Right ventricle myocardium inferior (tissue), 1 donor: ENCODE measurements at regions of chr9 and their contacts with region 1.

Region 1: DNA sequence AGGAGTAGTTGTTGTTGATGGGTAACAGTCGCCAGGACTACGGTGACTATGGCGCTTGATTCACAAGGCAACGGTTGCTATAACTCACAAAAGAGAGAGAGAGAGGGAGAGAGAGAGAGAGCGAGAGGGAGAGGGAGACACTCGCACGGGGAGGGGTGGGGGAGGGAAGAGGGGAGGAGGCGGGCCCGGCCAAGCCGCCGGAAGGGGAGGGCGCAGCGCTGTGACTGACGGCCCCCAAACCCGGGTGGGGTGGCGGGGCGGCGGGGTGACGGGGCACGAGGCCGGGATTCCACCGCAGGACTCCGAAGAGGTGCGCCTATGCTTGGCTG is at the start of gene RFX3:
- DNase-seq: peak; percentile 95
- ATAC-seq: peak; percentile 96
- total RNA-seq, gene RFX3: 3.7 TPM

Region 2: DNA sequence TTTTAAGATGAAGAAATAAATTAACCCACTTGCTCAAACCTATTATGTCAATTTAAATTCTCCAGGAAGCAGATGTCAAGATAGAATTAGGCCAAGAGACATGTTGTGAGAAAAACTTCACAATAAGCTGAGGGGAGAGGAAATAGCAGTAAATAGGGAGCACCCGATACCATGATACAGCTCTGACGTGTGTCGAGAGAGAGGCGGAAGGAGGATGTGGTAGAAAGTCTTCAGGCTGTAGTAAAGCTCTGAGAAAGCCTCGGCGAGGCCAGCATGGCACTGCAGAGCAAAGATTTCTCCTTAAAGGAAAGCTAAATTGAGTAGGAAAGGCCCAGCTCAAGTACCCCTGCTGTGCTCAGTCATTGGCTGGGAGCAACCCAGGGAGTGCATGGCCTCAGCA is 675.9 kb before region 1 on chr9:
- intact Hi-C with region 1: loop called (anchors 2 kb)
- DNase-seq: no peak
- ATAC-seq: no peak

Region 3: GRCh38 chr9:3235497-3235896 is 290.3 kb before region 1 on chr9:
- intact Hi-C with region 1: no loop called
- DNase-seq: no peak
- ATAC-seq: no peak

Region 4: GRCh38 chr9:3473405-3473804 is 52.4 kb before region 1 on chr9:
- intact Hi-C with region 1: loop called (anchors 5 kb)
- DNase-seq: no peak
- ATAC-seq: no peak

Region 5: GRCh38 chr9:3614654-3615053 is 88.9 kb after region 1 on chr9:
- intact Hi-C with region 1: no loop called
- DNase-seq: no peak
- ATAC-seq: no peak

Region 6: DNA sequence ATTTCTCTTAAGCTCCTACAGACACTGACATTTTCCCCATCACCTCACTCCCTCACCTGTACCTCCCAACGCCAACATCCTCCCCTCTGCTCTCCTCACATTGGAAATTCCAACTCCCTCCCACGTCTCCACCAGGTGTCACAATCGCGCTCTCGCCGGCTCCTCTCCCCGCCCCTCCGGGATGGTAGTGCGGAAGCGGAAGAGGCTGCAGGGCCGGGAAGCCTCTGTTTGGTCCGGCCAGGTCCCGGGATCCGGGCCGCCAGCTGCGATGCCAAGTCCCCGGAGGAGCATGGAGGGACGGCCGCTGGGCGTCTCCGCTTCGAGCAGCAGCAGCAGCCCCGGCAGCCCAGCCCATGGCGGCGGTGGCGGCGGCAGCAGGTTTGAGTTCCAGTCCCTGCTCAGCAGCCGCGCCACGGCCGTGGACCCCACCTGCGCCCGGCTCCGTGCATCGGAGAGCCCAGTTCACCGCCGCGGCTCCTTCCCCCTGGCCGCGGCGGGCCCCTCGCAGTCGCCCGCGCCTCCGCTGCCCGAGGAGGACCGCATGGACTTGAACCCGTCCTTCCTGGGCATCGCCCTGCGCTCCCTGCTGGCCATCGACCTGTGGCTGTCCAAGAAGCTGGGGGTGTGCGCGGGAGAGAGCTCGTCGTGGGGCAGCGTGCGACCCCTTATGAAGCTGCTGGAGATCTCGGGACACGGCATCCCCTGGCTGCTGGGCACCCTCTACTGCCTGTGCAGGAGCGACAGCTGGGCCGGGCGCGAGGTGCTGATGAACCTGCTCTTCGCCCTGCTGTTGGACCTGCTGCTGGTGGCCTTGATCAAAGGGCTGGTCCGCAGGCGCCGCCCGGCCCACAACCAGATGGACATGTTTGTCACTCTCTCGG is 1136.5 kb after region 1 on chr9 and contains the start of gene PLPP6:
- intact Hi-C with region 1: loop called (anchors 10 kb)
- DNase-seq: peak; percentile 93
- ATAC-seq: peak; percentile 97
- total RNA-seq, gene PLPP6: 2.3 TPM